OCI-LY7 (cell line): ENCODE measurements at regions of chr6 and their contacts with region 1.

Region 1: DNA sequence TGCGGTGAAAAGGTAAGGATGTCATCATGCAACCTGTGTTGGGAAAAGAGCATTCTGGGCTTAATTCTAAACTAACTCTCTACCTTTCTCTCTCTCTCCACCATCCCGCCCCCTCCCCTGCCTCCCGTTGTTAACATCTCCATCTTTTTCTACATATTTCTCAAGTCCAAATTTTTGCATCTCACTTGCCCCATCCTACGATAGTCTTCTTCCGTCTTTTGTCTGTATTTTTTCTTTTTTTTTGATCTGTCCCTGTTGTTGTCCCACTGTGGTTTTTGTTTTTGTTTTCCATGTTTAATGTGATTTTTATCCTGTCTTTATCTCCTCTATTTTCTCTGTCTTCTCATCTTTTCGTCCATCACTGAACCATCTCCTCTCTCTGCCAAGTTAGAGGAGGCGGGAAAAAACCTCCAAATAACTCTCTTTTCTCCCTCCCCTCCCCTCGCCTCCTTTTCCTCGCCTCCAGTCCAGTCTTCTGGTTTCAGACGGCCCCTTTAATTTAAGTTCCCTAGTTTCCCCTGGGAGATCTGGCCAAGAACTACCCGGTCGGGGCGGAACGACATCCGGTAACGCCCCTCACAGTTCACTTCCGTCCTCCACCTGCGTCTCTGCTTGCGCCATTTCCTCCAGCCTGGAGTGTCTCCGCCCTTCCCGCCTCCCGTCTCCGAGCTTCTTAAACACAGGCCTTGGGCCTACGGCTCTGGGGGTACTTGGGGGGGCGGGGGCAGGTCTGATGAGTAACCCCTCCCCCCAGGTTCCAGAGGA is at the start of gene NFKBIL1:
- DNase-seq: peak; percentile 99
- H3K4me3 ChIP-seq: peak within 1 kb of the TSS; percentile 67
- H3K27ac ChIP-seq: peak within 1 kb of the TSS; percentile 64
- H3K4me1 ChIP-seq: peaks cover 62% of the 10 kb centered on the region
- CTCF ChIP-seq: peak; percentile 28; the same call in 1 of the 2 replicates
- total RNA-seq, gene NFKBIL1: 17.1 and 21.8 TPM in 2 replicates

Region 2: DNA sequence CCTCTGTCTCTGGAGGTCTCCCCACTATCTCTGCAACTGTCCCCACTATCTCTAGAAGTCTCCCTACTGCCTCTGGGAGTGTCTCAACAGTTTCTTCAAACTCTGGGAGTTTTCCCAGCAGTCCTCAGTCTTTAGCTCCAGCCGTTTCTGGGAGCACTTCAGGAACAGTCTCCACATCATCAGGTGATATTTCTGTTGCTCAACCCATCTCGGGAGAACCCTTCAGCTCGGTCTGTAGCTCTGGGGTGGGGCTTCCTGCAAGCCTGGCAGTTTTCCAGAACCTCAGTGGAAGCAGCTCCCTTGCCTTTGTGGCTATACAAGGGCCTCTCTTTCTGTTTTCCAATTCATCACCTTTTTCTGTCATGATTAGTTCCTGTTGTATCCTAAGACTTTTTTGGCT is 612.1 kb before region 1 on chr6:
- CTCF ChIA-PET with region 1: no interaction called
- POLR2A ChIA-PET with region 1: no interaction called
- intact Hi-C with region 1: no loop called
- DNase-seq: no peak
- H3K4me3 ChIP-seq: no peak overlapping the region
- H3K27ac ChIP-seq: no peak overlapping the region
- H3K4me1 ChIP-seq: no peaks in the 10 kb centered on the region
- CTCF ChIP-seq: no peak

Region 3: DNA sequence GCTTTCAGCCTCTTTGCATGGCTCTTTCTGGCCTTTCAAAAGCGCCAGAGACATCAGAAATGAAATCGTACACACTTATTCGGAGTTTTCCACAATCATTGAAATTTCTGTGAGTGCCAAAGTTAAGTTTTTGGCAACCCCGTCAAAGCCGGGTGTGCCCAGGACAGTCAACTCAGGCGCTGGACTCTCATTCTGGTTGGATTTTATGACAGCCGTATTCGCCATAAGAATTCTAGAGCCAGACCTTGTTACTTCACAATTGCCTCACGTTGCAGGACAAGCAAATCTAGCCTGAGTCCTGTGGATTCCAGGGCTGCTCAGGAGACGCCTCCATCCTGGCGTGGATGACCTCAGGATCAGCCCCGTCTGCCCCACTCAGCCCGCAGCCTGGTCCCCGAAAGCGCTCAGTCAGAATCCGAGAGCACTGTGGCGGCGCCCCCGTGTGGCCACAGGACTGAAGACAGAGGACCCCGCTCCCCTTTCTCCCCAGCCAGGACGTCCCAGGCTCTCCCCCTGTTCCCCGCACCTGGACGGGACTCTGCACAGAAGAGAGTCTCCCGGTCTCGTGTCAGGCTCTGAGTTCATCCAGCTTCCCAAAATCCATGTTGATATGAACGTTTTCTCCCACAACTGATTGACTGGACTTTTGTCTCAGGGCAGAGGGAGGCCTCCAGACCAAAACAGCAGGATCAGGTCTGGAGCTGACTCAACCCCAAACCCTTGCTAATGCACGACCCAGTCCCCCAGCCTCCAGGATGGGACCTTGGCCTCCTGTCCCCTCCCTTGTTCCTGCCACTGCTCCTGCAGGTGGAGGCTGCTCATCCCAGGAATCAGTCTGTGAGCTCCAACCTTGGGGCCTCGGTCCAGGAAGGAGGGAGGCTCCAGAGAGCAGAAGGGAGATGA is 105.5 kb before region 1 on chr6:
- CTCF ChIA-PET with region 1: no interaction called
- POLR2A ChIA-PET with region 1: no interaction called
- intact Hi-C with region 1: no loop called
- DNase-seq: peak; percentile 78
- H3K4me3 ChIP-seq: no peak overlapping the region
- H3K27ac ChIP-seq: no peak overlapping the region
- H3K4me1 ChIP-seq: no peaks in the 10 kb centered on the region
- CTCF ChIP-seq: peak; percentile 95

Region 4: DNA sequence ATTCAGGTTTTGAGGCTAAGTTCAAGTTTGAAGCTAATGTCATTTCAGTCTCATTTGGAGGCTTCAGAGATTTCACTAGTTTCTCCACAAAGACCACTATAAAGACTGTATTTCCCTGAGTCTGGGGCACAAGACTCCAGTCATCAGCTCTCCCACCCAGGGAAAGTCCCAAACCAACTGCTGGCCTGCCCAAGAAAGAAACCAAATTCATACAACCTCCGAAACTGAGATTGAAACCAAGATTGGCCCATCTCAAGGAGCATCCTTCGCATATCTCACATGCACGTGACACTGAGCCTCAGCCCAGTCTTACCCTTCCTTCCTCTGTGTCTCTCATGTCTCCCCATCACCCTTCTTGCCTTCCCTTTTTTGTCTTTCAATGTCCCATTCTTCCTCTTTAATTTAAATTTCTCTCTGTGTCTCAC is 21.4 kb after region 1 on chr6:
- CTCF ChIA-PET with region 1: interaction called, 3 read pairs
- POLR2A ChIA-PET with region 1: interaction called, 10 read pairs
- intact Hi-C with region 1: no loop called
- DNase-seq: peak; percentile 76
- H3K4me3 ChIP-seq: peak overlapping the region; percentile 27
- H3K27ac ChIP-seq: peak overlapping the region; percentile 75
- H3K4me1 ChIP-seq: peaks cover 66% of the 10 kb centered on the region
- CTCF ChIP-seq: no peak

Region 5: DNA sequence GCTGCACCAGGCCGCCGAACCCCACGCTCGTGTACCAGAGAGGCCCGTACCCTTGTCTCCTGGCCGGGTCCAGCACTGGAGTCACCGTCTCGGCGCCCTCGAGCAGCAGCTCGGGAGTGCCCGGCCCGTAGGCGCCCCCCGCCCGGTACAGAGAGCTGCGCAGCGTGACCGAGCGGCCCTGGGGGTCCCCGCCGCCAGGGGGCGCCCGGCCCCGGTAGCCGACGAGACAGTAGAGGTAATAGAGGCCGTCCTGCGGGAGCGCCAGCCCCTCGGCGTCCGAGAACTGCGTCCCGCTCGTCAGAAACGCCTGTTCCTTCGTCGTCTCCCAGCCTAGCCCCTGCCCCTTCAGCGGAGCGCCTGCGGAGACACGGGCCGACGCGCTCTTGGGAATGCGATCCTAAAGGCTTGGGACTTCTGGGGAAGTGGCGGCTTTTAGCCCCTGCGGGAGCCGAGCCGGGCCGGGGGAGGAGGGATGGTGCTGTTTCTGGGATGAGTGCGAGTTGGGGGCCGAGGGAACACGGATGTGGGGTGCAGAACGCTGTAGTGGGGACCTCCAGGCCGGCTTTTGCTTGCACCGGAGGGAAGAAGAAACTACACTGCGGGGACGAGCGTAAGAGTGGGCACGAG is 33.8 kb after region 1 on chr6:
- CTCF ChIA-PET with region 1: interaction called, 7 read pairs
- POLR2A ChIA-PET with region 1: interaction called, 11 read pairs
- intact Hi-C with region 1: loop called (anchors 1 kb)
- DNase-seq: peak; percentile 89
- H3K4me3 ChIP-seq: peak overlapping the region; percentile 87
- H3K27ac ChIP-seq: peak overlapping the region; percentile 86
- H3K4me1 ChIP-seq: peaks cover 78% of the 10 kb centered on the region
- CTCF ChIP-seq: peak; percentile 93

Region 6: GRCh38 chr6:31652925-31653718 is 106.0 kb after region 1 on chr6:
- CTCF ChIA-PET with region 1: no interaction called
- POLR2A ChIA-PET with region 1: interaction called, 19 read pairs
- intact Hi-C with region 1: loop called (anchors 1 kb)
- DNase-seq: peak; percentile 97
- H3K4me3 ChIP-seq: peak overlapping the region; percentile 76
- H3K27ac ChIP-seq: peak overlapping the region; percentile 75
- H3K4me1 ChIP-seq: peaks cover 19% of the 10 kb centered on the region
- CTCF ChIP-seq: peak; percentile 59

Region 7: DNA sequence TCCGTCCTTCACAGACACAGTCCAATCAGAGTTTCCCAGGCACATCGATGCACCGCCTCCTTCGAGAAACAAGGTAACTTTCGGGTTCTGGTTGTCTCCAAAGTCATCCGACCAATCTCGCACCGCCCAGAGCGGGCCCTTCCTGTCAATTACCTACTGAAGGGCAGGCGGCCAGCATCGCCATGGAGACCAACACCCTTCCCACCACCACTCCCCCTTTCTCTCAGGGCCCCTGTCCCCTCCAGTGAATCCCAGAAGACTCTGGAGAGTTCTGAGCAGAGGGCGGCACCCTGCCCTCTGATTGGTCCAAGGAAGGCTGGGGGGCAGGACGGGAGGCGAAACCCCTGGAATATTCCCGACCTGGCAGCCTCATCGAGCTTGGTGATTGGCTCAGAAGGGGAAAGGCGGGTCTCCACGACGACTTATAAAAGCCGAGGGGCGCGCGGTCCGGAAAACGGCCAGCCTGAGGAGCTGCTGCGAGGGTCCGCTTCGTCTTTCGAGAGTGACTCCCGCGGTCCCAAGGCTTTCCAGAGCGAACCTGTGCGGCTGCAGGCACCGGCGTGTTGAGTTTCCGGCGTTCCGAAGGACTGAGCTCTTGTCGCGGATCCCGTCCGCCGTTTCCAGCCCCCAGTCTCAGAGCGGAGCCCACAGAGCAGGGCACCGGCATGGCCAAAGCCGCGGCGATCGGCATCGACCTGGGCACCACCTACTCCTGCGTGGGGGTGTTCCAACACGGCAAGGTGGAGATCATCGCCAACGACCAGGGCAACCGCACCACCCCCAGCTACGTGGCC is 280.3 kb after region 1 on chr6 and contains the start of gene HSPA1B:
- CTCF ChIA-PET with region 1: no interaction called
- POLR2A ChIA-PET with region 1: no interaction called
- intact Hi-C with region 1: loop called (anchors 2 kb)
- DNase-seq: peak; percentile 94
- H3K4me3 ChIP-seq: peak within 1 kb of the TSS; percentile 76
- H3K27ac ChIP-seq: peak within 1 kb of the TSS; percentile 67
- H3K4me1 ChIP-seq: peaks cover 49% of the 10 kb centered on the region
- CTCF ChIP-seq: no peak
- total RNA-seq, gene HSPA1B: 160 and 177 TPM in 2 replicates